ENCODE measurements at regions of chr12 and their contacts with region 1.

Region 1: GRCh38 chr12:10562306-10562933 is 51.0 kb downstream of the MAGOHB start:
- DNase-seq: peak in 1 of 3 donors; percentile 55
- ATAC-seq: peak; percentile 45
- H3K4me3 ChIP-seq: no peak overlapping the region
- H3K4me1 ChIP-seq: no peaks in the 10 kb centered on the region
- CTCF ChIP-seq: peak; percentile 40

Region 2: GRCh38 chr12:9961106-9961505 is 601.3 kb before region 1 on chr12:
- intact Hi-C with region 1: no loop called
- DNase-seq: no peak
- ATAC-seq: no peak
- H3K4me3 ChIP-seq: no peak overlapping the region
- H3K4me1 ChIP-seq: no peaks in the 10 kb centered on the region
- CTCF ChIP-seq: no peak

Region 3: DNA sequence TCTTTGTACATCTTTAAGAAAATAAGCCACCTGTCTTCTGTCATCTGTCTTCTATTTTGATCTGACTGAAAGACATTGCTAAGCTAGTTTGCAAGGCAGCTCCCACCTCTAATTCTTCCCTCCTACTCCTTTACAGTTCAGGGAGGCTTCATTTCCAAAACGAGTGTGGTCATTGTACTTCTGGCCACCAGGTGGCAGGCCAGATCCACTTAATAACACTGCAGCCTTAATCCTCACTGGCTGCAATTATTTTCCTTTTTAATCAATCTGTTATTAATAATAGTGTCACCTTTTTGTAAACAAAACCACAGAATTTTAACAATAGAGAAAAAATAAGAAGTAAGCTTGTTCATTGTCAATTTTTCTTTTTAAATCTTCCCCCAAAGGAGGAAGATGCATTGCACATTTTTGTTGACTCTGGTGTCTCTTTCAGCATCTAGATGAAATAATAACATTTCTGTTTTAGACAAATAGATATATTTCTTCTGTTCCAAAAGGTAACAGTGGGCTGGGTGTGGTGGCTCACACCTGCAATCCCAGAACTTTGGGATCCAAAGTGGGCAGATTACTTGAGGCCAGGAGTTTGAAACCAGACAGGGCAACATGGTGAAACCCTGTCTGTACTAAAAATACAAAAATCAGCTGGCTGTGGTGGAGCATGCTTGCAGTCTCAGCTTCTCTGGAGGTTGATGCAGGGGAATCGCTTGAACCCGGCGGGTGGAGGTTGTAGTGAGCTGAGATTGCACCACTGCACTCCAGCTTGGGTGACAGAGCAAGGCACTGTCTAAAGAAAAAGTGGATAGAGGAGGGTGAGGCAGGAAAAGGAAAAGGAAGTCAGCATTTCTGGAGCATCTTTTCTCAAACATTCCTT is 326.4 kb before region 1 on chr12:
- intact Hi-C with region 1: loop called (anchors 5 to 10 kb)
- DNase-seq: peak in 1 of 3 donors; percentile 43
- ATAC-seq: peak; percentile 73
- H3K4me3 ChIP-seq: no peak overlapping the region
- H3K4me1 ChIP-seq: no peaks in the 10 kb centered on the region
- CTCF ChIP-seq: peak; percentile 75

Region 4: DNA sequence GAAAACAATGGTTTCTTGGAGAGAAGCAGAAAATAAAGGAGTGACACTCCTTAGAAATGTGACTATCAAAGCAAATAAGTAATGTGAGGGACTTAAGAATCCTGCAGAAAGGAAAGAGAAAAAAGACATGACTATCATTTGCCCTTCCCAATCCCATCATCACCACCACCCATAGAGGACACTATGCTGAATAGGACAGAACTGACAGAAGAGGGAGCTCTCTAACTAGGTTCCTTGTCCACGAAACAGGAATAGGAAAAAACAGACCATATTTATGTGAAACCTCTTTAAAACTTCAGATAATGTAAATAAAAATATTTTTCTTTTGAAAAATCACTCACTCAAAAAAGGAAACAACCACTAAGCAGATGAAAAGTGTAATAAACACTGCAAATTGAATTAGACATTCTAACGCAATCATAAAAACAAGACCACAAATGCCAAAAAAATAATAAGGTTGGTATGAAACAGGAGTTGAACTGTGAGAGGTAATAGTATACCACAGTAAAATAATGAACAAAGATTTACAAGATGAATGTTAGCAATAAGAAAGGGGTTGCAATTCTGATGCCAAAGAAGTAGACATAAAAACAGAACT is 230.7 kb before region 1 on chr12:
- intact Hi-C with region 1: loop called (anchors 1 to 5 kb)
- DNase-seq: peak in 1 of 3 donors; percentile 37
- ATAC-seq: peak; percentile 79
- H3K4me3 ChIP-seq: no peak overlapping the region
- H3K4me1 ChIP-seq: no peaks in the 10 kb centered on the region
- CTCF ChIP-seq: no peak

Region 5: GRCh38 chr12:10861366-10861765 is 298.9 kb after region 1 on chr12:
- intact Hi-C with region 1: no loop called
- DNase-seq: no peak
- ATAC-seq: no peak
- H3K4me3 ChIP-seq: no peak overlapping the region
- H3K4me1 ChIP-seq: no peaks in the 10 kb centered on the region
- CTCF ChIP-seq: no peak

Measured in mucosa of descending colon (tissue), 3 donors.